ENCODE measurements at regions of chr19 and their contacts with region 1.

Region 1: GRCh38 chr19:13302526-13303270 is 152.5 kb downstream of the IER2 start:
- DNase-seq: peak in 6 of 10 donors; percentile 52 to 91 (median 57)
- H3K4me3 ChIP-seq: no peak overlapping the region
- H3K27ac ChIP-seq: peak overlapping the region in 48 of 59 donors; percentile 6 to 95 (median 54)
- H3K27me3 ChIP-seq: peaks cover 0 to 3% (median 0%) of the 10 kb centered on the region in 45 donors
- CTCF ChIP-seq: no peak

Region 2: GRCh38 chr19:13430790-13431582 is 128.3 kb after region 1 on chr19:
- intact Hi-C with region 1: loop called in 1 of 2 experiments (anchors 10 kb)
- DNase-seq: peak in 8 of 10 donors; percentile 36 to 66 (median 52)
- H3K4me3 ChIP-seq: no peak overlapping the region
- H3K27ac ChIP-seq: peak overlapping the region in 23 of 59 donors; percentile 12 to 93 (median 60)
- H3K27me3 ChIP-seq: no peaks in the 10 kb centered on the region
- CTCF ChIP-seq: peak in 54 of 56 donors; percentile 17 to 70 (median 56)